ENCODE measurements at regions of chr7 and their contacts with region 1.

Region 1: GRCh38 chr7:12490117-12490688 is 80.3 kb upstream of the SCIN start:
- DNase-seq: no peak
- H3K4me3 Mint-ChIP-seq: no peak overlapping the region
- H3K27ac Mint-ChIP-seq: no peak overlapping the region
- H3K4me1 Mint-ChIP-seq: peaks cover 18% of the 10 kb centered on the region
- H3K27me3 Mint-ChIP-seq: no peaks in the 10 kb centered on the region
- CTCF ChIP-seq: peak; percentile 53

Region 2: DNA sequence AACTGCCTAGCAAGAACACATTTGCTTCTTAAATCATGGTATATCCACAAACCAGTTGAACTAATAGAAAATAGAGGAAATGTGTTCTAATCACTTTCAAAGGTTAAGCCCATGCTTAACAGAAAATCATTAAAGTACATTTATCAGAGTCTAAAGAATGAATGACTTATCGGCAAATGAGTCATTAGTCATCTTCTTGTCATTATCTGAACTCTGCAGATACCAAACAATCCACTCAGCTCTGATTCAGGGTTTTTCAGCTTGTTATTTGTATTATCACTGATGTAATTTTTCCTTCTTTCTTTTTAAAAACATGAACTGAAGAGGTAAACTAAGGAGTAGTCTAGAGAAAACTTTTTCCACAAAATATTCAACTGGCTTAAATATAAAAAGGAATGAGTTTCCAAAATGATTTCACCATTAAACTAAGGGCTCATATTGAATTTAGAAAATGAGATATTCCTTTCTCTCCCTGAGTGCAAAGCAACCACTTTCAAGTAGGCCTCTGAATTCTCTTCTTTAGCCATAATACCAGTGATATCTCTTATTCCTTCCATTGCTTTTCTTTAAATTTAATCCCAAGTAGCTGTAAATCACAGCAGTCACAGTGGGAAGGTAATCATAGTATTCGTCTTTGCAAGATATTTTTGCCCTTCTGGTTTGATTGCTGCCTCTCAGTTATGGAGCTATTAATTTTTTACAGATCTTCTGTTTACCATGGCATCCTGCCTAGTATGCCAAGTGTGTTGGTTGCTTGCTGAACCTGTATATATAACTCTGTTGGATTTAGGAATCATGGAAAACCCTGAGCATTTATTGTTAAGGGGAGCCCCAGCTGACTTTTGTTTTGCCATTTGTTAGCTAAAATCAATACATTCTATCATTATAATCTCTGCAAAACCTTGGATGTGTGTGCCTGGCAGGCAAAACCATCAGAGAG is 783.3 kb before region 1 on chr7:
- CTCF ChIA-PET with region 1: interaction called, 12 read pairs
- intact Hi-C with region 1: no loop called
- DNase-seq: peak; percentile 59
- H3K4me3 Mint-ChIP-seq: peak overlapping the region; percentile 13
- H3K27ac Mint-ChIP-seq: peak overlapping the region; percentile 27
- H3K4me1 Mint-ChIP-seq: peaks cover 24% of the 10 kb centered on the region
- H3K27me3 Mint-ChIP-seq: no peaks in the 10 kb centered on the region
- CTCF ChIP-seq: no peak

Region 3: DNA sequence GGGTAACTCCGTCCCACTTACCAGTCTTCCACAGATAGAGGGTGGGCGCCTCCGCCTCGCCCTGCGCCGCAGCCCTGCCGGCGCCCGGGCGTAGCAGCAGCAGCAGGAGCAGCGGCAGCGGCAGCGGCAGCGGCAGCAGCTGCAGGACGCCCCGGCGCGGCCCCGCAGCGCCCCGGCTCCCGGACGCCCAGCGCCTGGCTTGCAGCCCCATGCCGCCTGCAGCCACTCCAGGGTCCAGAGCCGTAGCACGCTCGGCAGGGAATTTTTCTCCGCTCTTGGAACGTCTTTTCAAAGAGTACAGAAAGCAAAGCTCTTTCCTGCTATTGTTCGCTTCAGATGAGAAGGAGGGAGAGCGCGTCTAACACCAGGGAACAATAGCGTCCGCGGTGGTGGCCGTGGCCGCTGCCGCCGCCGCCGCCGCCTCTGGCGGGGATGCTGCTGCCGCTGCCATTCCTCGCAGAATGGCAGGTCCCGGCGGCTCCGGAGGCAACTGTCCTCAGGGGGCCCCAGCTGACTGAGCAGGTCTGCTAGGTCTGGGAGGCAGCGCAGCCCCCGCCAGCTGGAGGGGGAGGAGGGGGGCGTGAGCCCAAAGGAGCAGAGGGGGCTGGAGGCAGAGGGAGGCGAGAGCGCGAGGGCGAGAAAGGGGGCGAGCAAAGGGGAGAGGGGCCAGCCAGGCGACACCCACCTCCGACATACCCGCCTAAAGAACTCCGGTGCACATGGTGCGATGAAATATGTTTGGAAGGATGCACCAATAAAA is 658.3 kb before region 1 on chr7 and contains the start of gene THSD7A:
- CTCF ChIA-PET with region 1: no interaction called
- intact Hi-C with region 1: loop called (anchors 1 kb)
- DNase-seq: peak; percentile 81
- H3K4me3 Mint-ChIP-seq: peak within 1 kb of the TSS; percentile 88
- H3K27ac Mint-ChIP-seq: peak within 1 kb of the TSS; percentile 67
- H3K4me1 Mint-ChIP-seq: peaks cover 17% of the 10 kb centered on the region
- H3K27me3 Mint-ChIP-seq: no peaks in the 10 kb centered on the region
- CTCF ChIP-seq: peak; percentile 50
- total RNA-seq, gene THSD7A: 5.9 and 8.3 TPM in 2 replicates

Region 4: DNA sequence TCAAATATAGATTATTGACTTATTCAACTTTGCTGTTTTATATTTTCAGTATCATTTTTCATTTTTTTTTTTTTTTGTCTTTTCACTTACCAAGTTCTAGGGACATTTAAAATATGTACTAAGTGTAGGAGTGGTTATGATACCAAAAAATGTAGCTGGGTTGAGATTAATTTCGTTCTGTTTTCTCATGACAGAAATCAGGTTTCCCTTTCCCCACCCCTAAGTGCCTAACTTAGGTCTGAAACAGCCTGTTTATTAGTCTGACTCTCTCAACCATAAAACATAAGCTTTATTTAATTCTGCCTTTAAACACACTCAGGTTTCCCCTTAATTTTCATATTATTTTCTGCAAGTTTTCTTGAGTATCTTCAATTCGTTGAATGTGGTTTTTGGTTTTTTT is 257.0 kb before region 1 on chr7:
- CTCF ChIA-PET with region 1: no interaction called
- intact Hi-C with region 1: loop called (anchors 10 kb)
- DNase-seq: no peak
- H3K4me3 Mint-ChIP-seq: no peak overlapping the region
- H3K27ac Mint-ChIP-seq: no peak overlapping the region
- H3K4me1 Mint-ChIP-seq: no peaks in the 10 kb centered on the region
- H3K27me3 Mint-ChIP-seq: no peaks in the 10 kb centered on the region
- CTCF ChIP-seq: no peak

Region 5: GRCh38 chr7:12358694-12359093 is 131.5 kb before region 1 on chr7:
- CTCF ChIA-PET with region 1: no interaction called
- intact Hi-C with region 1: no loop called
- DNase-seq: no peak
- H3K4me3 Mint-ChIP-seq: no peak overlapping the region
- H3K27ac Mint-ChIP-seq: no peak overlapping the region
- H3K4me1 Mint-ChIP-seq: no peaks in the 10 kb centered on the region
- H3K27me3 Mint-ChIP-seq: no peaks in the 10 kb centered on the region
- CTCF ChIP-seq: no peak

Region 6: GRCh38 chr7:12389089-12389700 is 101.0 kb before region 1 on chr7:
- CTCF ChIA-PET with region 1: interaction called, 12 read pairs
- intact Hi-C with region 1: loop called (anchors 1 kb)
- DNase-seq: peak; percentile 73
- H3K4me3 Mint-ChIP-seq: no peak overlapping the region
- H3K27ac Mint-ChIP-seq: no peak overlapping the region
- H3K4me1 Mint-ChIP-seq: peaks cover 18% of the 10 kb centered on the region
- H3K27me3 Mint-ChIP-seq: no peaks in the 10 kb centered on the region
- CTCF ChIP-seq: peak; percentile 82

Region 7: DNA sequence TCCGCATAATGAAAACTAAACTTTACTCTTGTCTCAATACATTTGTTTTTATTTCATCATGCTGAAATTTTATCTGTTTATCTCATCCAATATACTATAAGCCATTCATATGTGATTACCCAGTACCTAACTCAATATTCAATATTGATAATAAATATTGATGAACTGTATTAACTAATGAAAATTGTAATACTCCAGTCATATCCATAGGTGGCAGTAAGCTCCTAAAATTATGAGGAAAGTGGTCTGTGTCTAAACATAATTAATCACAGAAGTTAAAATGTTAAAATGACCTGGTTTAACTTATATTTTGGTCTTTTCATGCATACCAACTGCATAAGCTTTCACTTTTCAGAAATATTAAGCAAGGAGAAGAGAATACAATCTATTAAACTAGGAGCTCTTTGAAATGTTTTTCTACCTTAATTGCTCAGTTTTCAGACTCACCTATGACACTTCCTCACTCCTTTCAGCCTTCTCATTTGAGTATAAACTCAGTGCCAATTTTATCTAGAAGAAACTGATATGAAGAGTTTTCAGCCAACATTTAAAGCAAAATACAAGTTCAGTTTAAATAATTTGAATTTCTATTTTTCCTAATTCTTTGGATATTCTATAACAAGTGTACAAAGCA is 56.1 kb before region 1 on chr7:
- CTCF ChIA-PET with region 1: interaction called, 24 read pairs
- intact Hi-C with region 1: loop called (anchors 1 kb)
- DNase-seq: no peak
- H3K4me3 Mint-ChIP-seq: no peak overlapping the region
- H3K27ac Mint-ChIP-seq: no peak overlapping the region
- H3K4me1 Mint-ChIP-seq: no peaks in the 10 kb centered on the region
- H3K27me3 Mint-ChIP-seq: no peaks in the 10 kb centered on the region
- CTCF ChIP-seq: peak; percentile 61

Region 8: DNA sequence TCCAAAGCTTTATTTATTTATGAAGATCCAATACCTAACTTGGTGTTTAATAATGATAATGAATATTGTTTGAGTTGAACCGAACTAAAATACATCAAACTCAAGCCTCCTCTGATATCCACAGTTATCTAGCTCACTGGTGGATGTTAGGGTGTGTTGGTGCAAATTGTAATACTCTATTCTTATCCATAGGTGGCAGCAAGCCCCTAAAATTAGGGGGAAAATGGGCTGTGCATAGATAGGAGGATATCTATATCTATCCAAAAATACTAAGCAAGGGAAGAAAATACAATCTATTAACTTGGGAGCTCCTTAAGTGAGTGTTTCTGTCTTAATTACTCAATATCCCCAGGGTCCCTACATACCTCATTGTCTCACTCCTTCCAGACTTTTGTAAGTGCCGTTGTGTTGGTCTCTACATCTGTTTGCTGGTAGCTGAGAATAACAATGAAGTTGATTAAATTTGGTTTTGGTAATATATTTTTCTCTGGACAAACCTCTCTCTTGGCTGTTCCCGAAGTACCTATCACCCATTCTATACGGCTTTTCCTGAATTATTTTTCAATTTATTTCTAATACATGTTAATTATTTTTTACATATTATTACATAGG is 31.6 kb before region 1 on chr7:
- CTCF ChIA-PET with region 1: interaction called, 66 read pairs
- intact Hi-C with region 1: loop called (anchors 1 kb)
- DNase-seq: peak; percentile 49
- H3K4me3 Mint-ChIP-seq: no peak overlapping the region
- H3K27ac Mint-ChIP-seq: no peak overlapping the region
- H3K4me1 Mint-ChIP-seq: no peaks in the 10 kb centered on the region
- H3K27me3 Mint-ChIP-seq: no peaks in the 10 kb centered on the region
- CTCF ChIP-seq: peak; percentile 84